ENCODE measurements at regions of chr10 and their contacts with region 1.

Region 1: GRCh38 chr10:22003079-22003913 is at the start of gene DNAJC1:
- DNase-seq: peak; percentile 99
- ATAC-seq: peak; percentile 100
- total RNA-seq, gene DNAJC1: 13.7 TPM

Region 2: DNA sequence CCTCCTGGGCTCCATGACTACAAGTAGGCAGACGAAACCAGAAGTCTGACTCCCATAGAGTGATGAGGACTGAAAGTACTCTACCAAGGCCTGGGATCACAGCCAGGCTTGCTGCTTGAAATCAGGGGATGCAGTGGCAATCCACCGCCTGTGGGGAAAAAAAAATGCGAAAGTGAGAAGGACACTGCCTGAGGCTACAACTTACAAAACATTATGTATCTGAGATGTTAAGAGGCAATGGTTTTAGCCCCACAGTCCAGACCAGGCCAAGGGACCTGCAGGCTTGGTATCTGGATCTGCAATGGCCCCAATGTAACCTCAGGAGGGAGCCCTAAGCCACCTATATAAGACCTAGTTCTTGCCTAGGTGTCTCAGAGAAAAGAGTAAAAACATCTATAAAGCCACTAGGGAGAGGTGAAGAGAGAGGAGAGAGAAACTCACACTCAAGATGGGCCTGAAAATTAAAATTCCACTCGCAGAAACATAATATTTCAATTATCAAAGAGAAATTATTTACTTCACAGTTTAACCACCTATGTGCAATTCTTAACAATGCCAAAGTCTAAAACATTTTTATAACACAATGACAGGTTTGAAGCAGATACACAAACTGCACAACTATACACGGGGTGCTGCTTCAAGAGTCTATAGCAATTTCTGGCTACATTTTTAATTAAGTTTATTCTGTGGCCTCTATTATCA is 13.7 kb before region 1 on chr10:
- intact Hi-C with region 1: loop called (anchors 1 kb)
- DNase-seq: peak; percentile 56
- ATAC-seq: peak; percentile 92

Region 3: DNA sequence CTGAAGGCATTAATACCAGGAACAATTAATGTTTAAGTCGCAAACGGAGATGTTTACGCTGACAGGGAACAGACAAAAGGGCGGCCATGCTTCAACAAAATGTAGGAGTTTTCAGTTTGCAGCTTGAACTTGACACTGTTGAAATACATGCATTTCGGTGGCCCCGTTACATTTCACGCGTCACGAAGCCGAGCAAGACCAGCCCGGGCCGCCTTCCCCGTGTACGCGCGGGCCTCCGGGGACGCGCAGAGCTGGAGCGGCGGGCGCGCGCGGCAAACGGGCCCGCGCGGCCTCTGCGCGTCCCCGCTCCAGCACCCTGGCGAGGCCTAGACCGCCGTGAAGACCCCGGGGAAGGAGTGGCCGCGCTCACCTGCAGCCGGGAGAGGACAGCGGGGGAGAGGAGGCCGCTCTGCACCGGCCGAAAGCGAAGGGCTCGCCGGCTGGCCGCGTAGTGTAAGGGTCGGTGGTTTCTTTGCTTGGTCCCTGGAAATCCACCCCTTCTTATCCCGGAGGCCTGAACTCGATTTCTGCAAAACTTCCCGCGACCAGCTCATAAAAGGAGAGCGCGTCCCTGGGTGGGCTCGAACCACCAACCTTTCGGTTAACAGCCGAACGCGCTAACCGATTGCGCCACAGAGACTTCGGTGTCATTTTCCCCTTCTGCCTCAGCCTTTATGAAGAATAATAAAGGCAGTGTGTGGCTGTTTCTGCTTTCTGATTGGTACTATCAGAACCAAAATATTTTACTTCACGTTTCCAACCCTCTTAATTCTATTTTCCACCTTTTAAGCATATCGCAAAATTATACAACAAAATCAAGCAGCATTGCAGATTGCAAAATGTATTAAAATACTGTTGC is 225.9 kb after region 1 on chr10:
- intact Hi-C with region 1: loop called (anchors 5 kb)
- DNase-seq: peak; percentile 90
- ATAC-seq: peak; percentile 99

Region 4: DNA sequence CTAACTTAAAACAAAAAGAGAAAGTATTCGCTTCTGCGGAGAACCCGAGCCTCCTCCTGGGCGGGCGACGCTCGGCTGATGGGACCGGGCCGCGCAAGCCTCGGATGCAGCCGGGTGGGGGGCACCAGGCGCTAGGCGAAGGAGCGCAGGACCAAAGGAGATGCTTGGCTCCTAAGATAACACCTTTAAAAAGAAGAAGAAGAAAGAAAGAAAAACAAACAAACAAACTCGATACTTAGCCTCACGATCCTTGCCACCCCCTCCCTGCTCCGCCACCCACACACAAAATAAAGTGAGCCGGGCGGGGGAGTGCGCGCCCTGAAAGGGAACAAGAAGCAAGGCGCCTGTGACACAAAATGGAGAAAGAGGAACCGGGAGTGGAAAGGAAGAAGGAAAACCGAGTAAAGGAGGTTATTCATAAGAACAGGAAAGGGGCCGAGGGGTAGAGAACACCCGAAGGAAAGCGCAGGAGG is 248.5 kb after region 1 on chr10:
- intact Hi-C with region 1: loop called (anchors 5 kb)
- DNase-seq: peak; percentile 88
- ATAC-seq: peak; percentile 71

Region 5: GRCh38 chr10:22316285-22317120 is 313.2 kb after region 1 on chr10 and contains the start of gene COMMD3:
- intact Hi-C with region 1: loop called (anchors 5 kb)
- DNase-seq: peak; percentile 96
- ATAC-seq: peak; percentile 92
- total RNA-seq, gene COMMD3: 89.9 TPM

Region 6: DNA sequence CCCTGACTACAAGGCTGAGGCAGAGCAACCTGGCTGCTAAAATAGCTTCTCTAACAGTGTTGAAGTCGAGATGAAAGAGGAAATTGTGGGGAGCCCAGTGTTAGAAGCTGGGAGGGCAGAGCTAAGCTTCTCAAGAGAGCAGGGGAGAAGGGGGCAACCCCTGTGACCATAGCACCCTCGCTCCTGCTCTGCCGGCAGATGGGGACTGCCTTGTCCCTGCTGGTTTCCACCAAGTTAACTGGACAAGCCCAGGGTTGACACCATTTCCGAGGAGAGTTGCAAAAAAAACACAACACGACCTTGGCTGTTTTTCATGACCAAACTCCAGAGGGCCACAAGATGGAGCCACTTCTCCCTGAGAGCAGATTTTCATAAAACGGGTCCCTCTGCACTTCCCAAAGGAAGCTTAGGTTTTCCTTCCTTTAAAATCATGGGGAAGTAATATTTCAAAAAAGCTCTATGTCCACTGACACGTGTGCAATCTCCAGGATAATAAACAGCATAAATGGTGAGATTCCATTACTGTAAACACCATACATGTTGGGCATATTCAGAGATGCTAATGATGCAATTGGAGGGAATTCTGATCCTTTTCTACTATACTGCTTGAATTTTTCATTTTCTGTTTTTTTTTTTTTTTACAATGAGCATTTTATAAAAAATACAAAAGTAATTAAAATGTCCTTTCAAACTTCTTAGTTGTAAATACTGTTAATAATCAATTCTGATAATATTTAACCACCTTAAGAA is 570.7 kb after region 1 on chr10:
- intact Hi-C with region 1: loop called (anchors 10 kb)
- DNase-seq: no peak
- ATAC-seq: no peak

Region 7: GRCh38 chr10:23067939-23068775 is 1064.9 kb after region 1 on chr10:
- intact Hi-C with region 1: loop called (anchors 10 kb)
- DNase-seq: peak; percentile 87
- ATAC-seq: peak; percentile 62

Measured in Right ventricle myocardium inferior (tissue), 1 donor.